Activated CD4-positive, alpha-beta T cell treated with anti-CD3 and anti-CD28 coated beads, Interleukin-2, amount 10 ng/mL, durations not matched to agents 24 days and 14 days (primary cell): ENCODE measurements at regions of chr20 and their contacts with region 1.

Region 1: DNA sequence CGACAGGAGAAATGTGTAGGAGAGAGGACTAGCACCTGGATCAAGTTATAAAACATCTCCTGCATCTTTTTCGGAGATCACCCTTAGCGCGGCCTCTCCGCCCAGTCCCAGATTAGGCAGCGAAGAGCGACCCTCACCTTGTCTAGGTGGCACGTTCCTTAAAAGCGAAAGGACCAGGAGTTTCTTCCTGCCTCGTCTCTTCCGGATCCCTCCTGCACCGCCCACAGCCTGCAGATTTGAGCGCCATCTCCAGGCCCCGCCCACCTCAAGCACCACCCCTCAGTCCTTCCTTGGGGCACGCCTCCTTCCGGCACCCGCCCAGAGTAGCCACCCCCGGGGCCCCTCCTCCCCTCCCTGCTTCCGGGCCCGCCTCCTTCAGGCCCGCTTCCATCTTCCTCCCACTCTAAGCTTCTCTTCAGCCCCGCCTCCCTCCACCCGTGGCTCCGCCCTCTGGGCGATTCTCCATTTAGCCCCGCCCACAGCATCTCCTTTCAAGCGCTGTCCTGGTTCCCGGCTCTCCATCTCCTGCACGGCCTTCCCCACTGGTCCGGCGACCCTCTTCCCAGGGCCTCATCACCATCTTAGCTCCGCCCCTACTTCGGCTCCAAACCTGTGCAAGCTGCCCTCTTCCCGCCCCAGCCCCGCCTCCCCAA is 662 bp upstream of the RALY start:
- DNase-seq: peak; percentile 100
- H3K4me3 Mint-ChIP-seq: peak overlapping the region; percentile 83
- H3K27ac Mint-ChIP-seq: peak overlapping the region; percentile 96
- H3K4me1 Mint-ChIP-seq: peaks cover 48% of the 10 kb centered on the region
- H3K27me3 Mint-ChIP-seq: no peaks in the 10 kb centered on the region

Region 2: DNA sequence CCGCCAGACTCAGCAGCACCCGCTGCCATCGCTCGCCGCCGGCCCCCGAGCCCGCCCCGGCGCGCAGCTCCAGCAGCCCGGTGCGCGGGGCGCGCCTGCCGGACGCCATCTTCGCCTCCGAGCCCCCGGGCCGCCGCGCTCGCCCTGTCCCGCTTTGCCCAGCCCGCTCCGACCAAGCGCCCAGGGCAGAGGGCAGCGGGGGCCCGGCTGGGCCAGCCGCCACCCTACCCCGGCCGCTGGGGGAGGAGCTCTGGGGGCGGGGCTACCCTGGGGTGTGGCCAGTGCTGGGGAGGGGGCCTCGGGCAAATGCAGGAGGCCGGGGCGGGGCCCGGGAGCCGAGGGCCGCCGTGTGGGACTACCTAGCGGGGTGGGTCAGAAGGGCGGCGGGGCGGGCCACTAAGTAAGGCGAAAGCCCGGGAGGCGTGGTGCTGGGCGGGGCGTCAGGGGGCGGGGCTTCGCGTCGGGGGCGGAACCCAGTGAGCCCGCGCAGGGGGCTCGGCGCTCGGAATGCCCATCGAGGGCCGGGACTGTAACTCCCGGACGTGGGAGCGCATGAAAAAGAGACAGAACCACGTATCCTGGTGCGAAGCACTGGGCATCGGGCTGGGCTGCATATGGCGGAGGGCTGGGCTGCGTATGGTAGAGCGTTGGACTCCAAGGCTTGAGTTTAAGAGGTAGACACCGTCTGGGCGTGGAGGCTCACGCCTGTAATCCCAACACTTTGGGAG is 549.4 kb before region 1 on chr20 and contains the start of gene SNTA1:
- intact Hi-C with region 1: loop called (anchors 2 kb)
- DNase-seq: peak; percentile 96
- H3K4me3 Mint-ChIP-seq: peak within 1 kb of the TSS; percentile 91
- H3K27ac Mint-ChIP-seq: peak within 1 kb of the TSS; percentile 72
- H3K4me1 Mint-ChIP-seq: peaks cover 16% of the 10 kb centered on the region
- H3K27me3 Mint-ChIP-seq: peaks cover 13% of the 10 kb centered on the region
- total RNA-seq, gene SNTA1: 0.91 and 1.0 TPM in 2 replicates

Region 3: GRCh38 chr20:33489495-33490022 is 503.5 kb before region 1 on chr20:
- intact Hi-C with region 1: loop called (anchors 2 kb)
- DNase-seq: peak; percentile 100
- H3K4me3 Mint-ChIP-seq: peak overlapping the region; percentile 87
- H3K27ac Mint-ChIP-seq: peak overlapping the region; percentile 92
- H3K4me1 Mint-ChIP-seq: peaks cover 8% of the 10 kb centered on the region
- H3K27me3 Mint-ChIP-seq: no peaks in the 10 kb centered on the region

Region 4: DNA sequence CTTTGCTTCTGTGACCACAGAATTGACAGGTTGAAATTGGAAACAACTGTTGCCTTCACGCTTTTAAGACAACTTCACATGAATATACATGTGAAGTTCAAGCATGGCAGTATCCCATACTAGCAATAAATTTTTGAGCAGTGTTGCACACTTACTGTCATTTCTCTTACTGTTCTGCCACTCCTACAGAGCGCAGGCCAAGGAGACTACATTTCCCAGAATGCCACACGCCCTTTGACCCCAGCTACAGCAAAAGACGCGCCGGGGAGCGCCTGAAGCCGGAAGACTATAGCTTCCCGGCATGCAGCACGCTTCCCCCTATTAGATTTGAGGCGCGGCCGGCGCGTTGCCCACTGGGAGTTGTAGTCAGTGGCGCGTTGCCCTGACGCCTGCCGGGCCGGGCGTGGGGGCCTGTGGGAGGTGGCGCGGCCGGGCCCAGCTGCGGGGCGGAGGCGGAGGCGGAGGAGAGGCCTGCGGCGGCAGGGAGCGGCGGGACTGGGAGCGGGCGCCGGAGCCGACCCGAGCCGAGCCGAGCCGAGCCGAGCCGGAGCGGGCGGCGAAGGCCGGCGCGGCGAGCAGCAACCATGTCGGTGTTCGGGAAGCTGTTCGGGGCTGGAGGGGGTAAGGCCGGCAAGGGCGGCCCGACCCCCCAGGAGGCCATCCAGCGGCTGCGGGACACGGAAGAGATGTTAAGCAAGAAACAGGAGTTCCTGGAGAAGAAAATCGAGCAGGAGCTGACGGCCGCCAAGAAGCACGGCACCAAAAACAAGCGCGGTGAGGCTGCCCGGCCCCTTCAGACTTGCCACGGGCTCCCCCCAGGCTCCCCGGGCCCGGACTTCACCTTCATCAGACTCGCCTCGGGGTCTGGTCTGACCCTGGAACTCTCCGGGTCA is 181.9 kb before region 1 on chr20 and contains the start of gene CHMP4B:
- intact Hi-C with region 1: loop called (anchors 1 kb)
- DNase-seq: peak; percentile 100
- H3K4me3 Mint-ChIP-seq: peak within 1 kb of the TSS; percentile 99
- H3K27ac Mint-ChIP-seq: peak within 1 kb of the TSS; percentile 98
- H3K4me1 Mint-ChIP-seq: peaks cover 34% of the 10 kb centered on the region
- H3K27me3 Mint-ChIP-seq: peaks cover 2% of the 10 kb centered on the region
- total RNA-seq, gene CHMP4B: 95.6 and 102 TPM in 2 replicates